ENCODE measurements at regions of chr12 and their contacts with region 1.

Region 1: GRCh38 chr12:104478396-104479122 is 21.8 kb downstream of the CHST11 start:
- DNase-seq: peak; percentile 45
- ATAC-seq: peak; percentile 70
- H3K4me3 Mint-ChIP-seq: peak overlapping the region; percentile 82
- H3K27ac Mint-ChIP-seq: peak overlapping the region; percentile 94
- H3K4me1 Mint-ChIP-seq: peaks cover 89% of the 10 kb centered on the region
- H3K27me3 Mint-ChIP-seq: no peaks in the 10 kb centered on the region

Region 2: DNA sequence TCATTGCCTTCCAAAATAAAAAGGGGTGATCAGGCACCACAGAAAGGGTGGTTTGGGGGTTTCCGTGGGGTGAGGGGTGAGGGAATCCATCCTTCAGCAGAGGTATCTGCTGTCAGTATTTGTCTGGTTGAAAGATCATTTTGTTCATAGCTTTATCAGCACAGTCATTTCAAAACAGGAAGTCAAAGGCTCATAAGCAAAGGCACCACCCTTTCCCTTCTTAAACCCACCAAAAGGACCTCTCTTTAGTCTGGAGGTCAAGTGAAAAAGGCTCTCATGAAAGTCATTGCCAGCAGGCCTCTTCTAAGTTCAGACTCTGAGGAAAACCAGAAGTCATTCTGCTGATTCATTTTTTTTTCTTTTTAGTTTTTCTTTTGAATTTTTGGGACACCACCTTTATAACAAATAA is 15.6 kb before region 1 on chr12:
- CTCF ChIA-PET with region 1: interaction called, 43 read pairs
- POLR2A ChIA-PET with region 1: interaction called, 68 read pairs
- DNase-seq: peak; percentile 63
- ATAC-seq: peak; percentile 55
- H3K4me3 Mint-ChIP-seq: peak overlapping the region; percentile 81
- H3K27ac Mint-ChIP-seq: peak overlapping the region; percentile 95
- H3K4me1 Mint-ChIP-seq: peaks cover 79% of the 10 kb centered on the region
- H3K27me3 Mint-ChIP-seq: no peaks in the 10 kb centered on the region

Region 3: GRCh38 chr12:104494137-104494792 is 15.7 kb after region 1 on chr12:
- CTCF ChIA-PET with region 1: interaction called, 8 read pairs
- POLR2A ChIA-PET with region 1: interaction called, 10 read pairs
- DNase-seq: peak; percentile 42
- ATAC-seq: peak; percentile 30
- H3K4me3 Mint-ChIP-seq: peak overlapping the region; percentile 63
- H3K27ac Mint-ChIP-seq: peak overlapping the region; percentile 80
- H3K4me1 Mint-ChIP-seq: peaks cover 90% of the 10 kb centered on the region
- H3K27me3 Mint-ChIP-seq: no peaks in the 10 kb centered on the region

Region 4: DNA sequence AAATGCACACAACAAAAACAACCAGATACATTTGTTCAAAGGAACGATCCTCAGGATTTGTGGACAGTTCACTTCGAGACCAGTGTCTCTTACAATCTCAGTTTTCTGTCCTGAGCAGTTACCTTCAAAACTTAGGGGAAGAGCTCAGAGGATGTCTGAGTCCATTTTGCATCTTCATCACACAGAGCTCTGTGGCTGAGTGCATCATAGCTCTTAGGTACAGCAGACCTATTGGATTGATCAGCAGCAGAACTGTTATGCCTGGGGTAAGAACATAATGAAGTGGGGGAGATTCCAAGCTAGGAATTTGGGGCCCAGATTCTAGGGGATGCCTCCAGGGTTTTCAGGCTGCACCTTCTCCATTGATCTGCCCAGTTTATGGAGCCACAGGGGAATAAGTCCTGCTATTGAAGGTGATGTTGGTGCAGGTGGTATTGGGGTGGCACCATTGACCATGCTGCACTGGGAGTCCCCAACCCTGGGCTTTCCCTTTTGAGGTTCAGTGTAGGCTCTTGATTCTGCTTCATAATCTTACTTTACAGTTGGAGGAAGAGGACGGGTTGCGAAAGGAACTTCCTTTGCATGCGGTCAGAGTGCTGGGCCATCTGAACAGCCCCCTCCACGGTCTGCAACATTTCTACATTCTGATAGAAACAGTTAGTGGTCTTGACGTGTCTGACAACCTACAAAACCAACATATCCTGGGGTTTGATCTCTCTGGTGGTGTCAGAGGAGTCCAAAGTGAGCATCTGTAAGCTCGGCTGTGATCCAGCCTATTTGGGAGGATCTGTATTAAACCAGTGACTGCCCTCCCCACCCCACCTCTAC is 91.0 kb after region 1 on chr12:
- CTCF ChIA-PET with region 1: interaction called, 9 read pairs
- POLR2A ChIA-PET with region 1: interaction called, 18 read pairs
- DNase-seq: peak; percentile 87
- ATAC-seq: peak; percentile 83
- H3K4me3 Mint-ChIP-seq: peak overlapping the region; percentile 45
- H3K27ac Mint-ChIP-seq: peak overlapping the region; percentile 86
- H3K4me1 Mint-ChIP-seq: peaks cover 71% of the 10 kb centered on the region
- H3K27me3 Mint-ChIP-seq: no peaks in the 10 kb centered on the region